ENCODE measurements at regions of chr14 and their contacts with region 1.

Region 1: GRCh38 chr14:93115069-93115820 is 480 bp downstream of the ITPK1 start:
- DNase-seq: peak; percentile 94
- H3K4me3 ChIP-seq: peak overlapping the region; percentile 83 to 87
- H3K27ac ChIP-seq: peak overlapping the region; percentile 61 to 91; a peak in 3 of 4 replicates
- H3K4me1 ChIP-seq: peaks cover 0 to 33% of the 10 kb centered on the region in 2 experiments; a peak in 3 of 4 replicates
- H3K27me3 ChIP-seq: no peaks in the 10 kb centered on the region
- CTCF ChIP-seq: no peak
- EP300 ChIP-seq: no peak
- RAD21 ChIP-seq: no peak

Region 2: DNA sequence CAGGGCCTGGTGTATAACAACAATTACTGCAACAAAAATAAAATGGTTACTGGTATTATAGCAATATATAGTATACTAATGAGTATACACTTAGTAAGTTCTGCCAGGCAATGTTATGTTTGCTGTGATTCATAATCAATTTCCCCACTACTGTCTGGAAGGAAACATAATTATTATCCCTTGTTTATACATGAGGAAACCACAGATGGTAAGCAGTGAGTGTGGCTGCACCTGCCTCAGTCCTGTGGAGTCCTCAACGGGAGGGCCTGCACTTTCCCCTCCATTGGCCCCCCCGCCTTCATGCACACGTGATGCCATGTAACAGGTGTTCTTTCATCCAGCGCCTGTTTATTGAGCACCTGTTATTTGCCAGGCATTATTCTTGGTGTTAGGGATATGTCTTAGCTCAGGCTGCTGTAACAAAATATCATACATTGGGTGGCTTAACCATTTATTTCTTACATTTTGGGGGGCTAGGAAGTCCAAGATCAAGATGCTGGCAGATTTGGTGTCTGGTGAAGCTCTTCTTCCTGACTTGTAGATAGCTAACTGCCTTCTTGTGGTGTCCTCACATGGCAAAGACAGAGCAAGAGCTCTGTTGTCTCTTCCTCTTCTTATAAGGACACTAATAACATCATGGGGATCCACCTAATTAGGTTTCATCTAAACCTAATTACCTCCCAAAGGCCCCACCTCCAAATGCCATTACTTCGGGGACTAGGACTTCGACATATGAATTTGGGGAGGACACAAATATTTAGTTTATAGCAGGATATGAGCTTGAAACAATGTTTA is 251.8 kb before region 1 on chr14:
- CTCF ChIA-PET with region 1: no interaction called
- POLR2A ChIA-PET with region 1: no interaction called
- DNase-seq: no peak
- H3K4me3 ChIP-seq: no peak overlapping the region
- H3K27ac ChIP-seq: no peak overlapping the region
- H3K4me1 ChIP-seq: peaks cover 0 to 12% of the 10 kb centered on the region in 2 experiments; a peak in 1 of 4 replicates
- H3K27me3 ChIP-seq: no peaks in the 10 kb centered on the region
- CTCF ChIP-seq: no peak
- EP300 ChIP-seq: no peak
- RAD21 ChIP-seq: no peak

Region 3: DNA sequence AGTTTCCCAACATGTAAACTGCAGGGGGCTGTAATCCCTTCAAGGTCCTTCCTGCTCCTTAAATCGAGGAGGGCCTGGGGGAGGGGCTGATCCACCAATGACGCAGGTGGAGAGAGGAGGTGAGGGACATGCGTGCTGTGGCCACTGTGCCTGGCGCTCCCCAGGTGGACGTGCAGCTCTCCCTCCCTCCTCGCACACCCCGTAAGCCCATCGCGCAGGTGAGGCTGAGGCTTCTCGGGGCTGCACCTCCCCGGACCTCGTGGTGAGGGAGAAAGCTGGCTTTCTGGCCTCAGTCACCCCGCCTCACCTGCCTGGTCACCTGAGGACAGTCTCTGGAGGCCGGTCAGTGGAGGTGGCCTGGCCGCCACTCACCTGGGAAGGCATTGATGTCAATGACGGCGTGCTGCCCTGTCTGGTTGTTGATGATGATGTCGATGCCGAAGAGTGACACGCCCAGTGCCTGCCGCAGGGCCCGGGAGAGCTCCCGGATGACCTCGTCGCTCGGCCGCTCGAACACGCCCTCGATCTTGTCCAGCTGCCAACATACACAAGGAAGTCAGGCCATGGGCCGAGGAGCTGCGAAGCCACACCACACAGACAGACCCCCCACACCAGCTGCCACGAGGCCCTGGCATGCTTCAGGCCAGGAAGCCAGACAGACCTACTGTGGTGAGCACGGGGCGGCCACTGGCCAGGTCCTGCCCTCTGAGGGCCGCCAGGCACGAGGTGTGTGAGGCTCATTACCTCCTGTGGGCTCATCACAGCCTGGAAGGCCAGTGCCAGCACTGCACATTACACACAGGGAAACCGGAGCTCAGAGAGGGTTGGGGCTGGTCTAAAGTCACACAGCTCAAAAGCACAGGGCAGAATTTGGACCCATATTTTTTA is 169.0 kb before region 1 on chr14:
- CTCF ChIA-PET with region 1: interaction called, 100 read pairs
- POLR2A ChIA-PET with region 1: interaction called, 4 read pairs
- DNase-seq: peak; percentile 62
- H3K4me3 ChIP-seq: no peak overlapping the region
- H3K27ac ChIP-seq: peak overlapping the region in 1 of 2 experiments; percentile 78; a peak in 2 of 4 replicates
- H3K4me1 ChIP-seq: peaks cover 0 to 34% of the 10 kb centered on the region in 2 experiments; a peak in 1 of 4 replicates
- H3K27me3 ChIP-seq: no peaks in the 10 kb centered on the region
- CTCF ChIP-seq: no peak
- EP300 ChIP-seq: no peak
- RAD21 ChIP-seq: no peak

Region 4: DNA sequence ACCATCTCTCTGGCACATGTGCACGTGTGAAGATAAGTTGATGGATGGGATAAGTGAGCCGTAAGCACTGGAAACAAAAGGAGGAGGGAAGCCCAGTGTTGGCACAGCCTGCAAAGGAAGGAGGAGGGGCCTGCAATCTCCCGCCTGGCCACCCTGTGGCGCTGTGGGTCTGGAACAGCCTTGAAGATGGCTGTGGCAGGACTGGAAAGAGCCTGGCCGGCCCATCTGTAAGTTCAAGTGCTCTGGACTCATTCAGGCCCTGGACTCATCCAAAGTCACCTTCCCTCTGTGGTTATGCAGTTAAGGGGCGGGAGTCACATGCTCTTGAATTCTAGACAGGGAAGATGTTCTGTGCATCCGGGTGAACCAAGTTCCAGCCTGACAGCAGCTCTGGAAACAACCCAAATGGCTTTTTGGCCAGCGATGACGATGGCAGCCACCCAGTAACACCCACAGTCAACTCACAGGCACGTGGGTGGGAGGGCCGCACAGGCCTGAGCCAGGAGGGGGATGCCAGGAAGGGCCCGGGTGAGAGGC is 141.9 kb before region 1 on chr14:
- CTCF ChIA-PET with region 1: interaction called, 13 read pairs
- POLR2A ChIA-PET with region 1: no interaction called
- DNase-seq: peak; percentile 74
- H3K4me3 ChIP-seq: no peak overlapping the region; a peak in 1 of 4 replicates
- H3K27ac ChIP-seq: peak overlapping the region in 1 of 2 experiments; percentile 83; a peak in 1 of 4 replicates
- H3K4me1 ChIP-seq: peaks cover 0 to 45% of the 10 kb centered on the region in 2 experiments; a peak in 1 of 4 replicates
- H3K27me3 ChIP-seq: no peaks in the 10 kb centered on the region
- CTCF ChIP-seq: peak; percentile 55
- EP300 ChIP-seq: no peak
- RAD21 ChIP-seq: peak; percentile 76

Region 5: DNA sequence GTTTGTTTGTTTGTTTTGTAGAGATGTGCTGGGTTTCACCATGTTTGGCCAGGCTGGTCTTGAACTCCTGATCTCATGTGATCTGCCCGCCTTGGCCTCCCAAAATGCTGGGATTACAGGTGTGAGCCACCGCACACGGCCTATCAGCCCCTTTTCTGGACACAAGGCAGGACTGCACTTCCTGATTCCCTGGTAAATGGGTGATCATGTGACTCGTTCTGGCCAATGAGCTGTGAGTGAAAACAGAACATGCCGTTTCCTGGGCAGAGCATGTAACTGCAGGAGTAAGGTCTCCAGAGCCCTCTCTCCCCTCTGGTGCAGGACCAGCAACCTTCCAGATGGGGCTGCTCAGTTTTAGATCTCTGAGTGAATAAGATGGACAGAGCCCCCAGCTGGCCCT is 92.2 kb before region 1 on chr14:
- CTCF ChIA-PET with region 1: interaction called, 13 read pairs
- POLR2A ChIA-PET with region 1: no interaction called
- DNase-seq: peak; percentile 83
- H3K4me3 ChIP-seq: no peak overlapping the region
- H3K27ac ChIP-seq: peak overlapping the region in 1 of 2 experiments; percentile 88; a peak in 2 of 4 replicates
- H3K4me1 ChIP-seq: peaks cover 0 to 54% of the 10 kb centered on the region in 2 experiments; a peak in 1 of 4 replicates
- H3K27me3 ChIP-seq: no peaks in the 10 kb centered on the region
- CTCF ChIP-seq: no peak
- EP300 ChIP-seq: no peak
- RAD21 ChIP-seq: peak; percentile 35; the same call in 1 of the 2 replicates

Region 6: DNA sequence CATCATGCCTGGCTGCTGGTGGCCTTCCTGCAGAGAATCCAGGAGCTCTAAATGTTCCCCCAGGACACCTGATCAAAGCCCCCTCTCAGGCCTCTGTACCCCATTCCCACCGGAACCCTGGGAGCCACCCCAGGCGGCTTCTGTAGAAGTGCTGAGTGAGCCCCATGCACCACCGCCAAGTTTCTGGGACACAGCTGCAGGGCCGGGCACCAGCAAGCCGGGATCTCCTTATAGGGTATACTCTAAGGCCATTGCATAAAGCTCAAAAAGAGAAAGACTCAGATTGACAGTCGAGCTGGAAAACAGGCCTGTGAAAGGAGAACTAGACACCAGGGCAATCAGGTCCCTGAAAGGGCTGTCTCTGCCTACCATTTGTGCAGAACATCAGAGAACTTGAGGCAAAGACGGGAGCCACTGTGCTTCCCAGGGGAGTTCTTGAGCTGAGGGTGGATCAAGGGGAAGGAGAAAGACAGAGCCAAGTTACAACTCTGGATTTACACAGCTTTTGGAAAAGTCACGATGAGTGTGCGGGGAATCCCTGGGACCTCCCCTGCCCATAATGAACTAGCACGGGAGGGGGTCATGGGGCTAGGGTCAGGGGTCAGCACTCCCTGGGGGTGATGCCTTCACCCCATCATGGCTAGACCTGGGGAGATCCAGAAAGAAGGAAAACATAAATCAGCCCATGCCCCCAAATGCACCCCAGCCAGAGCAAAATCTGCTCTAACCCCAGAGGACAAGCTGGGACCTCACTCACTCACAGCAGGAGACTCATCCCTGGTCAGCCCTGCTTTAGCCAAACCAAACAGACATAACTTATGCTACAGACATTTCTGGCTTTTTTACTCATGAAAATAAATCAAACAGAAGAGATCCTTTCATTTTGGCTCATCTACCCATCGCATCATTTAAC is 50.6 kb before region 1 on chr14:
- CTCF ChIA-PET with region 1: interaction called, 13 read pairs
- POLR2A ChIA-PET with region 1: no interaction called
- DNase-seq: no peak
- H3K4me3 ChIP-seq: no peak overlapping the region
- H3K27ac ChIP-seq: no peak overlapping the region
- H3K4me1 ChIP-seq: peaks cover 11 to 31% of the 10 kb centered on the region in 2 experiments; a peak in 3 of 4 replicates
- H3K27me3 ChIP-seq: no peaks in the 10 kb centered on the region
- CTCF ChIP-seq: no peak
- EP300 ChIP-seq: no peak
- RAD21 ChIP-seq: no peak

Region 7: GRCh38 chr14:93103392-93104080 is 11.7 kb before region 1 on chr14:
- CTCF ChIA-PET with region 1: interaction called, 135 read pairs
- POLR2A ChIA-PET with region 1: interaction called, 3 read pairs
- DNase-seq: peak; percentile 9
- H3K4me3 ChIP-seq: no peak overlapping the region
- H3K27ac ChIP-seq: no peak overlapping the region
- H3K4me1 ChIP-seq: peaks cover 0 to 37% of the 10 kb centered on the region in 2 experiments; a peak in 1 of 4 replicates
- H3K27me3 ChIP-seq: no peaks in the 10 kb centered on the region
- CTCF ChIP-seq: no peak
- EP300 ChIP-seq: no peak
- RAD21 ChIP-seq: no peak

Region 8: GRCh38 chr14:93153121-93153520 is 37.9 kb after region 1 on chr14:
- CTCF ChIA-PET with region 1: no interaction called
- POLR2A ChIA-PET with region 1: no interaction called
- DNase-seq: no peak
- H3K4me3 ChIP-seq: no peak overlapping the region
- H3K27ac ChIP-seq: no peak overlapping the region
- H3K4me1 ChIP-seq: peaks cover 0 to 3% of the 10 kb centered on the region in 2 experiments; a peak in 1 of 4 replicates
- H3K27me3 ChIP-seq: no peaks in the 10 kb centered on the region
- CTCF ChIP-seq: no peak
- EP300 ChIP-seq: no peak
- RAD21 ChIP-seq: no peak

Region 9: DNA sequence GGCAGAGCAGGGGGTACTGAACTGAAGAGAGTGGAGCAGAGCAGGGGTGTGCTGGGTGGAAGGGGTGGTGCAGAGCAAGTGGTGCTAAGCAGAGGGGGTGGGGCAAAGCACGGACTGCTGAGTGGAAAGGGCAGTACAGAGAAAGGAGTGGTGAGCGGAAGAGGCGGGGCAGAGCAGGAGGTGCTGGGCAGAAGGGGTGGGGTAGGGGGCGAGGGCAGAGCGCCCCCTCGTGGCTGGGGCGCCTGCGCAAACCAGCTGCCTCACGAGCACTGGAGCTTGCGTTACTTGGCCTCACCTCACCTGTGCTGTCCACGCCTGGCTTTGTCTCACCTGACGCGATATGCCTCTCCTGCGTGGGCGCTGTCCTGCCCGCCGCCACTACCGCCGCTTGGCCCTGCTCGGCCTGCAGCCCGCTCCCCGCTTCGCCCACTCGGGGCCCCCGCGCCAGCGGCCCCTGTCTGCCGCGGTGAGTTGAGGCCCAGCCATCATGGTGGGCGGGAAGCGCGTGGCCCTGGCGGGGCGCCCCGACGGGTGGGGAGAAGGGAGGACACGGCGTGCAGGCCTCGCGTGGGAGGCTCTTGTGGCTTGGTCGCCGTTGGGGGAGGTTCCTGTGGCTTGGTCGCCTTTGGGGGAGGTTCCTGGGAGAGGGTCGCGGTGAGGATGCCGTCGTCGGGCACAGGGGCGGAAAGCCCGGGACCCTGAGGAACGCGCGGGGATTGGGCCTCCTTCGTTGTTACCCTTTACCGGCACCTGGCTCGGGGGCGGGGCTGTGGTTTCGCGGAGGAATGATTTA is 231.9 kb after region 1 on chr14 and contains the start of gene COX8C:
- CTCF ChIA-PET with region 1: no interaction called
- POLR2A ChIA-PET with region 1: no interaction called
- DNase-seq: no peak
- H3K4me3 ChIP-seq: no peak within 1 kb of the TSS
- H3K27ac ChIP-seq: no peak within 1 kb of the TSS
- H3K4me1 ChIP-seq: no peaks in the 10 kb centered on the region
- H3K27me3 ChIP-seq: no peaks in the 10 kb centered on the region
- CTCF ChIP-seq: no peak
- EP300 ChIP-seq: no peak
- RAD21 ChIP-seq: no peak
- polyA plus RNA-seq, gene COX8C: not detected in 2 replicates